ENCODE measurements at regions of chr12 and their contacts with region 1.

Region 1: DNA sequence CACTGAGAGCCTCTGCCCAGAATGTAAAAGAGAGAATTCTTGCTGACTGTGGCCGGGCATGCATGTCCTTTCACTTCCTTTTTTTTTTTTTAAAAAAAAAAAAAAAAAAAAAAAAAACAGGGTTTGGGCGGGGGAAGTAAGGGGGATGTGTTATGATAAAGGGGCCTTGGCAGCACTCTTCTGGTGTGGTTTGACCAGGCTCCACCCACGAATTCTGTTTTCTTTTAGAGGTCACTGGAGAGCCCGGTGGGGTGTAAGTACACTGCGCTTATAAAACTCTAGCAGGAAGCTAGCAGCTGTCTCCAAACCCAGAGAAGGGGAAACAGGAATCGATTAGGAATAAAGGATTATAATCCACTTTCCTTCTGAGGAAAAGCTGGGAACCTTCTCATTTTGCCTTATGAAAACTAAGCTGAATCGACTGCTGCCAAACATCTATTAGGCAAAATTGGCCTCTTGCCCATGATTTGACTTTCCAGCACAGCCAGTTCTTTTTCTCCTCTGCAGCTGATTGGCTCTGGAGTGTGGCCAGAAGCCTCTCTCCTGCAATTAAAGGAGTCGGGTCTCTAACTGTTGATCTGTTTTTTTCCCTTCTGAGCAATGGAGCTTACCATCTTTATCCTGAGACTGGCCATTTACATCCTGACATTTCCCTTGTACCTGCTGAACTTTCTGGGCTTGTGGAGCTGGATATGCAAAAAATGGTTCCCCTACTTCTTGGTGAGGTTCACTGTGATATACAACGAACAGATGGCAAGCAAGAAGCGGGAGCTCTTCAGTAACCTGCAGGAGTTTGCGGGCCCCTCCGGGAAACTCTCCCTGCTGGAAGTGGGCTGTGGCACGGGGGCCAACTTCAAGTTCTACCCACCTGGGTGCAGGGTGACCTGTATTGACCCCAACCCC is 27.7 kb upstream of the HIGD1C start:
- DNase-seq: peak; percentile 97
- H3K4me3 ChIP-seq: peak overlapping the region; percentile 72 to 91 (median 83)
- H3K27ac ChIP-seq: peak overlapping the region; percentile 87 to 91 (median 88)
- H3K4me1 ChIP-seq: peaks cover 35 to 57% (median 53%) of the 10 kb centered on the region in 4 donors
- H3K27me3 ChIP-seq: no peaks in the 10 kb centered on the region
- CTCF ChIP-seq: no peak
- EP300 ChIP-seq: no peak
- POLR2A ChIP-seq: no peak

Region 2: GRCh38 chr12:50825372-50825838 is 99.3 kb before region 1 on chr12:
- intact Hi-C with region 1: loop called (anchors 5 kb)
- DNase-seq: no peak
- H3K4me3 ChIP-seq: no peak overlapping the region
- H3K27ac ChIP-seq: peak overlapping the region; percentile 58 to 75 (median 63)
- H3K4me1 ChIP-seq: peaks cover 0 to 15% (median 9%) of the 10 kb centered on the region in 4 donors
- H3K27me3 ChIP-seq: no peaks in the 10 kb centered on the region
- CTCF ChIP-seq: peak; percentile 53 to 60 (median 53)
- EP300 ChIP-seq: no peak
- POLR2A ChIP-seq: no peak